HepG2 (cell line): ENCODE measurements at regions of chr18 and their contacts with region 1.

Region 1: GRCh38 chr18:658001-658946 is 821 bp downstream of the TYMS start:
- DNase-seq: peak; percentile 92
- ATAC-seq: peak; percentile 96
- H3K4me3 ChIP-seq: peak overlapping the region; percentile 66 to 93 (median 91)
- H3K27ac ChIP-seq: peak overlapping the region; percentile 96
- H3K4me1 ChIP-seq: peaks cover 49% of the 10 kb centered on the region
- H3K27me3 ChIP-seq: no peaks in the 10 kb centered on the region
- CTCF ChIP-seq: peak; percentile 5; the same call in 1 of the 2 replicates
- EP300 ChIP-seq: peak; percentile 31 to 40; a peak in 2 of 4 replicates
- POLR2A ChIP-seq: peak; percentile 93 to 95
- RAD21 ChIP-seq: peak; percentile 48; the same call in 1 of the 2 replicates

Region 2: GRCh38 chr18:596288-596881 is 61.9 kb before region 1 on chr18:
- CTCF ChIA-PET with region 1: no interaction called
- POLR2A ChIA-PET with region 1: no interaction called
- in situ Hi-C with region 1: no loop called
- intact Hi-C with region 1: loop called (anchors 2 kb)
- DNase-seq: peak; percentile 43
- ATAC-seq: peak; percentile 89
- H3K4me3 ChIP-seq: peak overlapping the region; percentile 39 to 64 (median 61); a peak in 5 of 6 replicates
- H3K27ac ChIP-seq: peak overlapping the region; percentile 49
- H3K4me1 ChIP-seq: peaks cover 16% of the 10 kb centered on the region
- H3K27me3 ChIP-seq: 0 out of 5 replicates have a peak, but pooled peaks cover 0 to 3% of the 10 kb centered on the region in 2 experiments
- CTCF ChIP-seq: no peak
- EP300 ChIP-seq: no peak
- POLR2A ChIP-seq: peak in 1 of 2 experiments; percentile 58; a peak in 2 of 4 replicates
- RAD21 ChIP-seq: no peak

Region 3: DNA sequence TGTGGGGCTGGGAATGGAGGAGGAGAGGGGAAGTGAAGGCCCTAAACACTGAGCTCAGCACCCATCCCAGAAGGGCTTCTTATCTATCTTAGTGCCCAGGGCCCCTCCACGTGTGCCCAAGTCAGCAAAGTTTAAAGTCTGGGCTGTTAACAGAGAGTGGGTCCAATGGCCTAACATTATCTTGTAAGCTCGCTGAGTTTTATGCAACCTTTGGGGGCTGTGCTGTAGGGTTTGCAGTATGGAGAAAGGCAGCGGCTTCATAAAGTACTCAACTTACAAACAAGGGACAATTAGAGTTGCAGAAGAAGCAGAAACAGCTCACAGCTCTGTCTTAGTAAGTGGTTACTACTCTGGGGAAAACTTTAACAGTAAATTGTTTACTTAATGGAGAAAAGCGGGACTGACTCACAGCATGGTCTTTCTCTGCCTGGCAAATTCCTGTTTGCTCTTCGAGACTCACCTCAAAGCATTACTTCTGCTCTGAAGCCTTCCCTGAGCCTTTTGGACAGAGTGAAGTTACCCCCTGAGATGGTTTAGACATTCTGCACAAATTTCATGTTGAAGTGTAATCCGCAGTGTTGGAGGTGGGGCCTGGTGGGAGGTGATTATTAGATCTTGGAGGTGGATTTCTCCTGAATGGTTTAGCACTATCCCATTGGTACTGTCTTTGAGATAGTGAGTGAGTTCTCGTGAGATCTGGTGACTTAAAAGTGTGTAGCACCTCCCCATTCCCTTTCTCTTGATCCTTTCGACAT is 45.1 kb after region 1 on chr18:
- CTCF ChIA-PET with region 1: no interaction called
- POLR2A ChIA-PET with region 1: interaction called, 23 read pairs
- in situ Hi-C with region 1: no loop called
- intact Hi-C with region 1: no loop called
- DNase-seq: peak; percentile 73
- ATAC-seq: peak; percentile 87
- H3K4me3 ChIP-seq: peak overlapping the region in 2 of 3 experiments; percentile 9 to 26; a peak in 2 of 6 replicates
- H3K27ac ChIP-seq: peak overlapping the region; percentile 82
- H3K4me1 ChIP-seq: peaks cover 33% of the 10 kb centered on the region
- H3K27me3 ChIP-seq: no peaks in the 10 kb centered on the region
- CTCF ChIP-seq: no peak
- EP300 ChIP-seq: peak in 1 of 2 experiments; percentile 12; a peak in 1 of 4 replicates
- POLR2A ChIP-seq: no peak; a peak in 1 of 4 replicates
- RAD21 ChIP-seq: no peak

Region 4: DNA sequence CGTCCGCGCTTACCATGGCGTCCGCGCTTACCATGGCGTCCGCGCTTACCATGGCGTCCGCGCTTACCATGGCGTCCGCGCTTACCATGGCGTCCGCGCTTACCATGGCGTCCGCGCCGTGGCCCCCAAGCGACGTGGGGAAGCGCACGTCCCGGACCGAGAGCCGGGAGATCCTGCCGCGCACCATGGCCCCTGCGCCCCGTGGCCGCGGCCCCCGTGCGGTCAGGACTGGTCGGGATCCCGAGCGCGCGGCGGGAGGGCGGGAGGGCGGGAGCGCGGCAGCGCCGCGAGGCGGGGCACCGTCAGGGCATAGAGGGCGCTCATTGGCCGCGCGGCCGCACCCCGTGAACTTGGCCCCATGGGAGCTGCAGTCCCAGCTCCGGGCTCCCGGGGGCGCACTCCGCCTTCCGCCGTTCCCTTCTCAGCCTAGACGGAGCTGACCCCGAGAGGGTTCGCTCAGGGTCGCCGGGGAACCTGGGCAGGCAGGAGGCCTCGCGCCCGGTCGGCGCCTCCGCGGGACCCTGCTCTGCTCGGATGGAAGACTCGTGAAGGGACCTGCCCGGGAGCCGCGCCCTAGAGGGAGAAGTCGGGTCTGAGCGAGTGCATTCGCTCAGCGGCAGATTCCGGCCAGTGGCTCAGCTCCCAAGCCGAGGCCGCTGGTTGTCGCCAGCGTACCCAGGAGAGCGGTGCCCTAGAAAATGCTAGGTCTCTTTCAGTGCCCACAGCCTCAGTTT is 54.3 kb after region 1 on chr18 and contains the start of gene ENOSF1:
- CTCF ChIA-PET with region 1: no interaction called
- POLR2A ChIA-PET with region 1: interaction called, 16 read pairs
- in situ Hi-C with region 1: no loop called
- intact Hi-C with region 1: loop called (anchors 2 kb)
- DNase-seq: peak; percentile 76
- ATAC-seq: peak; percentile 96
- H3K4me3 ChIP-seq: peak within 1 kb of the TSS; percentile 65 to 79 (median 72)
- H3K27ac ChIP-seq: peak within 1 kb of the TSS; percentile 70
- H3K4me1 ChIP-seq: peaks cover 35% of the 10 kb centered on the region
- H3K27me3 ChIP-seq: no peaks in the 10 kb centered on the region
- CTCF ChIP-seq: peak; percentile 92
- EP300 ChIP-seq: no peak
- POLR2A ChIP-seq: peak; percentile 36 to 82; a peak in 2 of 4 replicates
- RAD21 ChIP-seq: peak; percentile 84
- total RNA-seq, gene ENOSF1: 21.1 and 37.6 TPM in 2 replicates

Region 5: DNA sequence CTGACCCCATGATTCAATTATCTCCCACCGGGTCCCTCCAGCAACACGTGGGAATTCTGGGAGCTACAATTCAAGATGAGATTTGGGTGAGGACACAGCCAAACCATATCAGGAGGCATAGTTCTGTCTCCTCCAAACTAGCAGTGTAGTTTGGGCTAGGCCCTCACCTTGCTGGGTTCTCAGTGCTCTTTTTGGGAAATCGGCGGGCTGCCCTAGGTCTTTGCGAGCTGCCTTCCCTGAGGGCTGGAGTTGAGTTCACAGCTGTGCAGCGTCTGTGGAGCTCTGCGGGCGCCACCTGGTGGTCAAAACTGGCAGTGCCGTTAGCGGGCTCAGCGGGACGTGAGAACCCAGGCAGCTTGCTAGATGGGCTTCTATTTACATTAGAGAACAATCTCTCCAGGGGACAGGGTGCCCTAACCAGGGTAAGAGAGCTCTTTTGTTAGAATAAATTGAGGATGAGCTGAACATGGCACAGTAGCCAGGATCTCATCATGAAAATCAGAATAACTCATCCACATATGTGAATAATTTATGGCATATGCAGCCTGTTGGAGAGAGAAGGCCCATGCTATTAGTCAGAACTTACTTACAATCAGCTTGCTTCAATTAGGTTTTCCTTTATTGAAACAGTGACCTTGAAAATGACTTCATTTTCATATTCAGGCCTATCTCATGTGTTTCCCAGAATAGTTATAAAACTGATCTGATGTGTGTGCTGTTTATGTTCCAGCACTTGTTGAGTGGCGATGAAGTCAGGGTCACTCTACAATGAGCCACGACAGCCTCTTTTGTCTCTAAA is 181.1 kb after region 1 on chr18:
- CTCF ChIA-PET with region 1: no interaction called
- POLR2A ChIA-PET with region 1: no interaction called
- in situ Hi-C with region 1: no loop called
- intact Hi-C with region 1: loop called (anchors 10 kb)
- DNase-seq: peak; percentile 69
- ATAC-seq: peak; percentile 96
- H3K4me3 ChIP-seq: peak overlapping the region; percentile 44 to 58 (median 46); a peak in 5 of 6 replicates
- H3K27ac ChIP-seq: no peak overlapping the region
- H3K4me1 ChIP-seq: peaks cover 54% of the 10 kb centered on the region
- H3K27me3 ChIP-seq: 0 out of 5 replicates have a peak, but pooled peaks cover 0 to 3% of the 10 kb centered on the region in 2 experiments
- CTCF ChIP-seq: peak; percentile 79
- EP300 ChIP-seq: no peak
- POLR2A ChIP-seq: no peak
- RAD21 ChIP-seq: peak; percentile 70; the same call in 1 of the 2 replicates